ENCODE measurements at regions of chr14 and their contacts with region 1.

Region 1: GRCh38 chr14:67514650-67515385 is 18.3 kb upstream of the PLEKHH1 start:
- DNase-seq: peak; percentile 60
- H3K4me3 ChIP-seq: peak overlapping the region; percentile 74
- H3K27ac ChIP-seq: peak overlapping the region; percentile 6
- H3K4me1 ChIP-seq: peaks cover 37% of the 10 kb centered on the region
- CTCF ChIP-seq: no peak

Region 2: DNA sequence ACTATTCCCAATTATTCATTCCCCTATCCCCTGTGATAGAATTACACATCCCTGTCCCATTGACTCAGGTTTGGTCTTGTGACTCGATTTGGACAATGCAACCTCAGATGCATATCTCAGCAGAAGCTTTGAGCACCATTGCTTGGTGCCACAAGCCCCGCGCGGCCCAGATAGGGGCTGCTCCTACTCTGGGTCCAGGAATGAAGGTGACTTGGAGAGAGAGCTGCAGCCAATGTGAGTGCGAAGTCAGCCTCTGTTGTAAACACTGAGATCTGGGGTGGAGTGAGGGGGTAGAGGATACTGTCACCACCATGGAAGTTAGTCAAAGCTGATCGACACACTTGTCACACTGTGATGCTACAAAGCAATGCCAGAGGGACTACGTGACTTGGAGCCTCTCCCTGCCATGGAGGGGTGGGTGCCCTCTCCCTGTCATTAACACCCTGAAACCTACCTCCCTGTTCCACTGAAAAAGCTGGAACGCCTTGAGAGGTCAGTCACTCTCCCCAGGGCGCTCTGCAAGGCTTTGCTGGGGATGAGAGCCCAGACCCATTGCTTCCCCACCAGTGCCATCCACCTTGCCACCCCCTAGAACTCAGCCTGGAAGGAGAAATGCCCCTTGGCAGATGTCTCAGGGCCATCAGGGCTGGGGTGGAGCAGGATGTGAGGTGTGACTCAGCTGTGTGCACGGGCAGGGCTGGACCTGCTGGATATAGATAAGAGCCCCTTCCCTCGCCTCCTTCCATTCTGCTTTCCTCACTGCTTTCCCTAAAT is 96.2 kb before region 1 on chr14:
- CTCF ChIA-PET with region 1: no interaction called
- POLR2A ChIA-PET with region 1: no interaction called
- intact Hi-C with region 1: no loop called
- DNase-seq: no peak
- H3K4me3 ChIP-seq: no peak overlapping the region
- H3K27ac ChIP-seq: no peak overlapping the region
- H3K4me1 ChIP-seq: peaks cover 3% of the 10 kb centered on the region
- CTCF ChIP-seq: no peak

Region 3: GRCh38 chr14:67477926-67478799 is 36.7 kb before region 1 on chr14:
- CTCF ChIA-PET with region 1: no interaction called
- POLR2A ChIA-PET with region 1: no interaction called
- intact Hi-C with region 1: no loop called
- DNase-seq: no peak
- H3K4me3 ChIP-seq: no peak overlapping the region
- H3K27ac ChIP-seq: no peak overlapping the region
- H3K4me1 ChIP-seq: peaks cover 16% of the 10 kb centered on the region
- CTCF ChIP-seq: no peak

Region 4: GRCh38 chr14:67487937-67488893 is 26.6 kb before region 1 on chr14 and contains the start of gene TMEM229B:
- CTCF ChIA-PET with region 1: interaction called, 5 read pairs
- POLR2A ChIA-PET with region 1: interaction called, 15 read pairs
- intact Hi-C with region 1: loop called (anchors 1 kb)
- DNase-seq: peak; percentile 95
- H3K4me3 ChIP-seq: peak within 1 kb of the TSS; percentile 57
- H3K27ac ChIP-seq: peak within 1 kb of the TSS; percentile 89
- H3K4me1 ChIP-seq: peaks cover 69% of the 10 kb centered on the region
- CTCF ChIP-seq: no peak
- total RNA-seq, gene TMEM229B: 3.9 and 4.8 TPM in 2 replicates

Region 5: DNA sequence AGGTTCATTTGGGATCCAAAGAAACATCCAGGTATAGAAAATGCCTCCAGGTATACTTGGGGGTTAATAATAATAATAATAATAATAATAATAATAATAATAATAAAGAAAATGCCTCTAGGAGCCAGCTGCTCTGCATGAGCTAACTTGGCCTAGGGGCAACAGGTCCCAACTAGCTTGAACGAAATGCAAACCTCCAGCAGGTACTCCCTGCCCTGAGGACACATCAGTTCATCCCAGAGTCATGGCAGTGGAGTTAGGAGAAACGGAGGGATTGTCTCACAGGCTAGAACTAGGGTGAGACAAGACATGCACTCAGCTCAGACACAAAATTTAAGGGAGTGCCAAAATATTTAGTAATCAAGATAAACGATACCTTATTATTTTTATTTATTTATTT is 13.8 kb before region 1 on chr14:
- CTCF ChIA-PET with region 1: no interaction called
- POLR2A ChIA-PET with region 1: interaction called, 10 read pairs
- intact Hi-C with region 1: no loop called
- DNase-seq: no peak
- H3K4me3 ChIP-seq: no peak overlapping the region
- H3K27ac ChIP-seq: no peak overlapping the region
- H3K4me1 ChIP-seq: no peaks in the 10 kb centered on the region
- CTCF ChIP-seq: no peak

Region 6: GRCh38 chr14:67644428-67644827 is 129.6 kb after region 1 on chr14:
- CTCF ChIA-PET with region 1: no interaction called
- POLR2A ChIA-PET with region 1: no interaction called
- intact Hi-C with region 1: no loop called
- DNase-seq: no peak
- H3K4me3 ChIP-seq: no peak overlapping the region
- H3K27ac ChIP-seq: no peak overlapping the region
- H3K4me1 ChIP-seq: no peaks in the 10 kb centered on the region
- CTCF ChIP-seq: no peak

Measured in OCI-LY7 (cell line).